Naive thymus-derived CD4-positive, alpha-beta T cell (primary cell): ENCODE measurements at regions of chr2 and their contacts with region 1.

Region 1: GRCh38 chr2:189783927-189784867 is at the starts of genes ORMDL1 and PMS1:
- DNase-seq: peak; percentile 90 to 96 (median 94)
- ATAC-seq: peak; percentile 95
- H3K4me3 ChIP-seq: peak within 1 kb of the TSS; percentile 76
- H3K4me3 Mint-ChIP-seq: peak within 1 kb of the TSS; percentile 86 to 97 (median 94)
- H3K27ac ChIP-seq: peak within 1 kb of the TSS; percentile 92
- H3K27ac Mint-ChIP-seq: peak within 1 kb of the TSS; percentile 89 to 97 (median 95)
- H3K4me1 ChIP-seq: peaks cover 21 to 24% of the 10 kb centered on the region in 2 donors
- H3K4me1 Mint-ChIP-seq: peaks cover 26 to 72% (median 57%) of the 10 kb centered on the region in 7 donors
- H3K27me3 ChIP-seq: no peaks in the 10 kb centered on the region
- H3K27me3 Mint-ChIP-seq: no peaks in the 10 kb centered on the region
- total RNA-seq, gene ORMDL1: 80.1 to 208 (median 142) TPM
- total RNA-seq, gene PMS1: 18.2 to 30.1 (median 22.5) TPM

Region 2: GRCh38 chr2:189302274-189302948 is 481.8 kb before region 1 on chr2:
- CTCF ChIA-PET with region 1: no interaction called
- POLR2A ChIA-PET with region 1: no interaction called
- intact Hi-C with region 1: loop called in 1 of 2 experiments (anchors 5 kb)
- DNase-seq: no peak
- ATAC-seq: no peak
- H3K4me3 ChIP-seq: no peak overlapping the region
- H3K4me3 Mint-ChIP-seq: peak overlapping the region in 8 of 10 donors; percentile 4 to 74 (median 60)
- H3K27ac ChIP-seq: no peak overlapping the region
- H3K27ac Mint-ChIP-seq: peak overlapping the region in 8 of 9 donors; percentile 25 to 95 (median 70)
- H3K4me1 ChIP-seq: peaks cover 56 to 88% of the 10 kb centered on the region in 2 donors
- H3K4me1 Mint-ChIP-seq: peaks cover 57 to 96% (median 91%) of the 10 kb centered on the region in 7 donors
- H3K27me3 ChIP-seq: no peaks in the 10 kb centered on the region
- H3K27me3 Mint-ChIP-seq: no peaks in the 10 kb centered on the region

Region 3: DNA sequence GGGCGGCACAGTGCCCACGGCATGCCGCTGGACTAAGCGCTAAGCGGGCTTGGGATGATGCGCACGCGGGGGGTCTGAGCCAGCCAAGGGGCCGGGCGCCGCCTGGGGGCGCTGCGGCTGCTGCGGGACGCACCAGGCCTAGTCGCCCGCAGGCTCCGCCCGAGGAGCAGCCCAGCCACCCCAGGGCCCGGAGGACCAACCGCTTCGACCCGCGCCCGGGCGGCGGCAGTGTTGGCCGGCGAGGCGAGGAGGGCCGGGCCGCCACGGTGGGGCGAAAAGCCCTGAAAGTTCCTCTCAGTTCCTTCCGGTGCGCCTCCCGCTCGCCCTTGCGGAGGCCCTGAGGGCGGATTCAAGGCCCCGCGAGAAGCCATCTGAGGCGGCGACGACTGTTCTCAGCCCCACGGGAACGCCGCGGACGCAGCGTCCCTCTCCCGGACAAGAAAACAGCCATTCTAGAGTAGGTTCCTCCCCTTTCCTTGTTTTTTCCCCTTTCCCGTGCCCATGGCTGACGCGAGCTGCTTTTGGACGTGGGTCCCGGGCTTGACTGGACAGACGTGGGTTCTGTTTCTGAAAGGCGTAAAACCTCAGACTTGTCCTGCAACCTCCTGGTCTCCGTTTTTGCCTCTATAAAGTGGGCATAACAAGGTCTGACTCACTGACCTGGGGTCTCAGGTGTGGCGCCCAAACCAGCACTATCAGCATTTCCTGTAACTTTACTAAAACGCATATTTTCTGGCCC is 109.7 kb before region 1 on chr2 and contains the start of gene ANKAR:
- CTCF ChIA-PET with region 1: no interaction called
- POLR2A ChIA-PET with region 1: interaction called, 3 read pairs
- intact Hi-C with region 1: loop called (anchors 1 kb)
- DNase-seq: peak; percentile 71 to 88 (median 84)
- ATAC-seq: peak; percentile 98
- H3K4me3 ChIP-seq: peak within 1 kb of the TSS; percentile 62
- H3K4me3 Mint-ChIP-seq: peak within 1 kb of the TSS; percentile 88 to 96 (median 95)
- H3K27ac ChIP-seq: peak within 1 kb of the TSS; percentile 86
- H3K27ac Mint-ChIP-seq: peak within 1 kb of the TSS; percentile 96 to 99 (median 97)
- H3K4me1 ChIP-seq: peaks cover 9 to 12% of the 10 kb centered on the region in 2 donors
- H3K4me1 Mint-ChIP-seq: peaks cover 17 to 49% (median 40%) of the 10 kb centered on the region in 7 donors
- H3K27me3 ChIP-seq: no peaks in the 10 kb centered on the region
- H3K27me3 Mint-ChIP-seq: no peaks in the 10 kb centered on the region
- total RNA-seq, gene ANKAR: 4.3 to 17.9 (median 10.3) TPM

Region 4: DNA sequence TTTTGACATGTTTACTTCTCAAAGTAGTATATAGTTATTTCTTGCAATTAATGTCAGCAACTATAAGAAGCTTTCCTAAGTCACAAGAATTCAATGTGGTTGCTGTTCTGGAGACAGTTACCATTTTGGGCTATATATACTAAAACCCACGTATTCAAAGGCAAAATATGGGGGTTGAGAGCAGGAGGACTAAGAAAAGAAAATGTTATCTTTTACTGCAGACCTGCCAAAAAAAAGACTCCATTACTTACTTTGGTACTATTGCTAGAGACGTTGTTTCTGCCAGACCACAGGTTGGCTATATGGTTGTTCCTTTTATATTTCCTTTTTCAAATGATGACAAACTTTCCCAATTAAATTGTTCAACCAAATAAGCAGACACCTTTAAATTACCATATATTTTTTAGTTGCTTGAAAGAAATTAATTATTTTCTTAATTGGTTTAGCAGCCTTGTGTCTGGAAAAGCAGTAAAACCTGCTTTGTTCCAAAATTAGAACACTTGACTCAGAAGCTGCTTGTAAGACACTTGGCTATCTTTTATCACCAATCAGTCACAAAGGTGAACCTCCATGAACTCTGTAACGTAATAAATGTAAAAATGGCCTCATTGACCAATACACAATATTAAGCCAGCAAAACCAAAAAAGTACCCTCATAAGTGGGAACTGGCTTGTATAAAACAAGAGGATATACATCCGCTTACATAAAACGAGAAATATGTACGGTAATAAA is 13.4 kb before region 1 on chr2:
- CTCF ChIA-PET with region 1: no interaction called
- POLR2A ChIA-PET with region 1: interaction called, 6 read pairs
- intact Hi-C with region 1: loop called in 1 of 2 experiments (anchors 1 kb)
- DNase-seq: no peak
- ATAC-seq: no peak
- H3K4me3 ChIP-seq: no peak overlapping the region
- H3K4me3 Mint-ChIP-seq: no peak overlapping the region
- H3K27ac ChIP-seq: no peak overlapping the region
- H3K27ac Mint-ChIP-seq: no peak overlapping the region
- H3K4me1 ChIP-seq: no peaks in the 10 kb centered on the region
- H3K4me1 Mint-ChIP-seq: peaks cover 0 to 15% (median 0%) of the 10 kb centered on the region in 7 donors
- H3K27me3 ChIP-seq: no peaks in the 10 kb centered on the region
- H3K27me3 Mint-ChIP-seq: no peaks in the 10 kb centered on the region

Region 5: DNA sequence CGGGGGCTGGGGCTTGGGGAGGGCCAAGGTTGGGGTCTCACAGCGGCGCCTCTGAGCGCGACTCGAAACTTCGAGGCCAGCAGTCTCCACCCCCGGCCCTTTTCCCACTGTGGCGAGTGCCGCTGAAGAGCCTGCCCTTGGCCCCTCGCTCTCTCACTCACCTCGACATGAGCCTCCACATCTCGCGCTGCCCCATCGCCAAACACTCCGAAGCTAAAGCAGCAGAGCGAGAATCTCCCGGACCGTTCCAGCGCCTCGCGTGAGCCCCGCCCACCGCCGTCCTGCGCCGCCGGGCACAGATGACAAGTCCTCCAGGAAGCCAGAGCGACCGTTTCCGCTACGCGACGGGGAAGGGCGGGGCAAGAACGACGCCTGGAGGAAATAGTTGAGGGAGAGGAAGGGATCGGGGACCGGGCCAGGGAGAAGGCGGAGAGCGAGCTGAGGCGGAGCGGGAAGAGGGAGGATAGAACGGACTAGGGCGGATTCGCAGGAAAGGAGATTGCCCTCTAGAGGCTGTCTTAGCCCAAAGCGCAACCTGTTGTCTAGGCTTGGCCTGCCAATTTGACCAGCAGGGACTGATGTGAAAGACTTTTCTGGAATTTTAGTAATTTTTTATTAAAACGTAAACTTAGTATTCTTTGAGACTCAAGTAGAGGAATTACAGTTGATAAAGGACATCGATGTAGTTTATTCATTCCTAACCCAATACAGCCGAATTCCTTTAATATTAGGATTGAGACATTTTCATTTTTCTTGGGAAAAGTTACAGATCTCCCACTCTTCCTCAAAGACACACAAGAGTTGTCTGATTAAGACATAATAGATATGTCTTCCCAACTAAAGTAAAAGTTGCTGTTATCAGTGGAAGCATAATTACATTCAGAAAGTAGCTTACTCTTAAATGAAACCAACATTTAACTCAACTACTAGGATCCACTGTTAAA is 535.6 kb after region 1 on chr2 and contains the start of gene HIBCH:
- CTCF ChIA-PET with region 1: no interaction called
- POLR2A ChIA-PET with region 1: interaction called, 3 read pairs
- intact Hi-C with region 1: loop called in 1 of 2 experiments (anchors 2 kb)
- DNase-seq: peak; percentile 56 to 88 (median 68)
- ATAC-seq: peak; percentile 94
- H3K4me3 ChIP-seq: peak within 1 kb of the TSS; percentile 83
- H3K4me3 Mint-ChIP-seq: peak within 1 kb of the TSS; percentile 85 to 100 (median 97)
- H3K27ac ChIP-seq: peak within 1 kb of the TSS; percentile 82
- H3K27ac Mint-ChIP-seq: peak within 1 kb of the TSS; percentile 91 to 99 (median 95)
- H3K4me1 ChIP-seq: peaks cover 8 to 13% of the 10 kb centered on the region in 2 donors
- H3K4me1 Mint-ChIP-seq: peaks cover 27 to 54% (median 48%) of the 10 kb centered on the region in 7 donors
- H3K27me3 ChIP-seq: no peaks in the 10 kb centered on the region
- H3K27me3 Mint-ChIP-seq: no peaks in the 10 kb centered on the region
- total RNA-seq, gene HIBCH: 11.3 to 25.0 (median 21.6) TPM

Region 6: DNA sequence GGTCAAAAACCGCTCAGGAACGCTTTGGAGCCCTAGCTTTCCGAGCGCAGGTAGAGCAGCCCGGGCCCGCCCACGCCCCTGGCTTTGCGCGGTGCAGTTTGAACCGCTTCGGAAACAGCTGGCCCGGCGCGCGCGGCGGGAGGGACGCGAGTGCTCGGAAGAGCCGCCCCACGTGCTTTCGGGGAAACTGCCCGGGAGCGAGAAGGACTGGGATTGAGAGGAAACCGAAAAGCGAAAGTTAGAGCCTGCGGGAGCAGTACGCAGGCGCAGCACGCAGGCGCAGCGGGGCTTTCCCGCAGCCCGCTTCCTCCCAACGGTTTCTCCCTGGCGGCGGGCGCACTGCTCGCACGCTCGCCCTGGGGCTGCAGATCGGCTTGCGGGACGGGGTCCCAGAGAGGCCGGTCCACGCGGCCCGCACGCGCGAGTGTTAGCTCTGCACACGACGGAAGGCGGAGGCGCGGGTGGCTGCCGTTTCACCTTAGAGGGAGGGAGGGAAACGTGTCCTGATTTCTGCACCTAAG is 1236.1 kb after region 1 on chr2:
- CTCF ChIA-PET with region 1: no interaction called
- POLR2A ChIA-PET with region 1: no interaction called
- intact Hi-C with region 1: loop called (anchors 5 to 10 kb)
- DNase-seq: peak; percentile 89 to 99 (median 94)
- ATAC-seq: peak; percentile 88
- H3K4me3 ChIP-seq: peak overlapping the region; percentile 78
- H3K4me3 Mint-ChIP-seq: no peak overlapping the region
- H3K27ac ChIP-seq: peak overlapping the region; percentile 82
- H3K27ac Mint-ChIP-seq: no peak overlapping the region
- H3K4me1 ChIP-seq: peaks cover 44 to 48% of the 10 kb centered on the region in 2 donors
- H3K4me1 Mint-ChIP-seq: peaks cover 11 to 46% (median 32%) of the 10 kb centered on the region in 7 donors
- H3K27me3 ChIP-seq: no peaks in the 10 kb centered on the region
- H3K27me3 Mint-ChIP-seq: peaks cover 0 to 2% (median 0%) of the 10 kb centered on the region in 5 donors